ENCODE measurements at regions of chr16 and their contacts with region 1.

Region 1: GRCh38 chr16:11133344-11133943 is 122.6 kb downstream of the SOCS1 start:
- DNase-seq: peak; percentile 60 to 81
- ATAC-seq: peak; percentile 57 to 78 (median 68)
- H3K4me3 ChIP-seq: no peak overlapping the region
- H3K27ac ChIP-seq: peak overlapping the region in 9 of 10 donors; percentile 21 to 89 (median 65)
- H3K4me1 ChIP-seq: peaks cover 8 to 86% (median 74%) of the 10 kb centered on the region in 9 donors
- H3K27me3 ChIP-seq: no peaks in the 10 kb centered on the region
- CTCF ChIP-seq: no peak

Region 2: GRCh38 chr16:11105038-11105903 is 28.2 kb before region 1 on chr16:
- intact Hi-C with region 1: loop called in 1 of 10 experiments (anchors 5 kb)
- DNase-seq: no peak
- ATAC-seq: peak; percentile 19 to 82 (median 42)
- H3K4me3 ChIP-seq: no peak overlapping the region
- H3K27ac ChIP-seq: peak overlapping the region in 5 of 10 donors; percentile 0 to 78 (median 30)
- H3K4me1 ChIP-seq: peaks cover 0 to 64% (median 52%) of the 10 kb centered on the region in 9 donors
- H3K27me3 ChIP-seq: no peaks in the 10 kb centered on the region
- CTCF ChIP-seq: no peak

Region 3: GRCh38 chr16:11121914-11122692 is 11.3 kb before region 1 on chr16:
- intact Hi-C with region 1: no loop called
- DNase-seq: no peak
- ATAC-seq: peak in 3 of 8 donors; percentile 37 to 63 (median 51)
- H3K4me3 ChIP-seq: no peak overlapping the region
- H3K27ac ChIP-seq: no peak overlapping the region
- H3K4me1 ChIP-seq: peaks cover 0 to 8% (median 5%) of the 10 kb centered on the region in 9 donors
- H3K27me3 ChIP-seq: no peaks in the 10 kb centered on the region
- CTCF ChIP-seq: no peak